Calu3 (cell line): ENCODE measurements at regions of chr6 and their contacts with region 1.

Region 1: GRCh38 chr6:32255199-32256153 is 31.6 kb upstream of the NOTCH4 start:
- DNase-seq: peak; percentile 92
- H3K4me3 Mint-ChIP-seq: peak overlapping the region; percentile 55
- H3K27ac Mint-ChIP-seq: peak overlapping the region; percentile 14
- H3K4me1 Mint-ChIP-seq: peaks cover 9% of the 10 kb centered on the region
- H3K27me3 Mint-ChIP-seq: peaks cover 50% of the 10 kb centered on the region
- CTCF ChIP-seq: peak; percentile 97

Region 2: GRCh38 chr6:32298663-32299267 is 43.3 kb after region 1 on chr6:
- CTCF ChIA-PET with region 1: no interaction called
- intact Hi-C with region 1: loop called (anchors 5 kb)
- DNase-seq: no peak
- H3K4me3 Mint-ChIP-seq: no peak overlapping the region
- H3K27ac Mint-ChIP-seq: peak overlapping the region; percentile 15
- H3K4me1 Mint-ChIP-seq: peaks cover 22% of the 10 kb centered on the region
- H3K27me3 Mint-ChIP-seq: peaks cover 4% of the 10 kb centered on the region
- CTCF ChIP-seq: no peak

Region 3: GRCh38 chr6:32369675-32370074 is 114.2 kb after region 1 on chr6:
- CTCF ChIA-PET with region 1: interaction called, 4 read pairs
- intact Hi-C with region 1: loop called (anchors 5 kb)
- DNase-seq: no peak
- H3K4me3 Mint-ChIP-seq: no peak overlapping the region
- H3K27ac Mint-ChIP-seq: no peak overlapping the region
- H3K4me1 Mint-ChIP-seq: peaks cover 45% of the 10 kb centered on the region
- H3K27me3 Mint-ChIP-seq: peaks cover 11% of the 10 kb centered on the region
- CTCF ChIP-seq: no peak

Region 4: DNA sequence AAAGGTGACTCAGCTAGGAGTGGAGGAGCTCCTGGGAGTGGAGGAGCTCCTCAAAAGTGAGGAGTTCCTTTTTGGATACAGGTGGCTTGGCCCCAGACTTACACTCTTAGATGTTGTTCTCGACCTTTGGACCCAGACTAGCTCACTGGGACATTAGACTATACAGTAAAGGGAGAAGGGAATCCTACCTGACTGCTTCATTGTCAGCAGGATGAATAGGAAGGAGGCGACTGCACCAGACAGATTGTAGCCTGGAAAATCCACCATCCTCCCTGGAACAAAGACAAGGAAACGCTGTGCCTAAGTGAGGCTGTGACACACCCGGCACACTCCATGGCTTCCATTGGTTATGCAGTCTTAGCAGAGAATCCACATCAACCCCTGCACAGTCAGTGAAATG is 151.4 kb after region 1 on chr6 and contains the start of gene BTNL2:
- CTCF ChIA-PET with region 1: no interaction called
- intact Hi-C with region 1: no loop called
- DNase-seq: no peak
- H3K4me3 Mint-ChIP-seq: no peak within 1 kb of the TSS
- H3K27ac Mint-ChIP-seq: no peak within 1 kb of the TSS
- H3K4me1 Mint-ChIP-seq: no peaks in the 10 kb centered on the region
- H3K27me3 Mint-ChIP-seq: peaks cover 87% of the 10 kb centered on the region
- CTCF ChIP-seq: no peak
- total RNA-seq, gene BTNL2: not detected in 2 replicates

Region 5: GRCh38 chr6:32796848-32797776 is 541.6 kb after region 1 on chr6:
- CTCF ChIA-PET with region 1: no interaction called
- intact Hi-C with region 1: loop called (anchors 10 kb)
- DNase-seq: peak; percentile 80
- H3K4me3 Mint-ChIP-seq: peak overlapping the region; percentile 27
- H3K27ac Mint-ChIP-seq: no peak overlapping the region
- H3K4me1 Mint-ChIP-seq: peaks cover 7% of the 10 kb centered on the region
- H3K27me3 Mint-ChIP-seq: peaks cover 91% of the 10 kb centered on the region
- CTCF ChIP-seq: peak; percentile 89